WTC11 (cell line): ENCODE measurements at regions of chr11 and their contacts with region 1.

Region 1: DNA sequence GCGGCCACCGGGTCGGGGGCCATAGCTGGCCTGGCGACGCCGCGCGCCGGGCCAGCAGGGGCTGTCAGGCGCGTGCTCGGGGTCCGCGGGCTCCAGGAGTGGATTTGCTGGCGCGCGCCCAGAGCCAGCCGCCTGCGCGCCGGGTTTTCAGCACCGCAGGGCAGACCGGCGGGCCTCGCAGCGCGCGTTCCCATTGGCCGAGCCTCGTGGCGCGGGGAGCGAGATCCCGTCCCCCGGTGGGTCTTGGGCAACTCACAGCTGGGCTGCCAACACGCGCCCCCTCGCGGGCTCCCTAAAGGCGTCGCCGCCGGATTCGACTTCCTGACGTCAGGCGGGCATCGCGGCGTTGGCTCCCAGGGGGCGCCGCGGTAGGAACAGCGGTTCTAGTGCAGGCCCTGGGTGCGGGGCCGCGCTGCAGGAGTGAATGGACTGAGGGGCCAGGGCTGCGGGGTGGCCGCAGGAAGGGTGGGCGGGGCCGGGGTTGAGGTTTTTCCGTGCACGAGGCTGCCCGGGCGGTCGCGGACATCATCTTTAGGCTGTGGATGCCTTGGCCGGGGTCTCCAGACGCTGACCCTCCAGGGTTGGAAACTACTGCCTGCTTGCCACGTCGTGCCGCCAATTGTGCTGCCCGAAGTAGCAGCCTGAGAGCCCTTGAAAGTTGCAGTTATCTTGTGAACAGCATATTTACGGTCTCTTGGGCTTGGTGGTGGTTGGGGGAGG is at the start of gene FADS1:
- DNase-seq: peak; percentile 90
- ATAC-seq: peak; percentile 32
- H3K4me3 Mint-ChIP-seq: peak within 1 kb of the TSS; percentile 94
- H3K27ac Mint-ChIP-seq: peak within 1 kb of the TSS; percentile 99
- H3K4me1 Mint-ChIP-seq: peaks cover 23% of the 10 kb centered on the region
- H3K27me3 Mint-ChIP-seq: no peaks in the 10 kb centered on the region; the same call in 1 of the 2 replicates
- CTCF ChIP-seq: no peak
- total RNA-seq, gene FADS1: 105 to 108 TPM (median 105 TPM) in 3 replicates

Region 2: GRCh38 chr11:61645179-61645868 is 171.6 kb before region 1 on chr11:
- CTCF ChIA-PET with region 1: no interaction called
- POLR2A ChIA-PET with region 1: no interaction called
- DNase-seq: no peak
- ATAC-seq: no peak
- H3K4me3 Mint-ChIP-seq: no peak overlapping the region
- H3K27ac Mint-ChIP-seq: no peak overlapping the region
- H3K4me1 Mint-ChIP-seq: no peaks in the 10 kb centered on the region
- H3K27me3 Mint-ChIP-seq: no peaks in the 10 kb centered on the region
- CTCF ChIP-seq: no peak

Region 3: DNA sequence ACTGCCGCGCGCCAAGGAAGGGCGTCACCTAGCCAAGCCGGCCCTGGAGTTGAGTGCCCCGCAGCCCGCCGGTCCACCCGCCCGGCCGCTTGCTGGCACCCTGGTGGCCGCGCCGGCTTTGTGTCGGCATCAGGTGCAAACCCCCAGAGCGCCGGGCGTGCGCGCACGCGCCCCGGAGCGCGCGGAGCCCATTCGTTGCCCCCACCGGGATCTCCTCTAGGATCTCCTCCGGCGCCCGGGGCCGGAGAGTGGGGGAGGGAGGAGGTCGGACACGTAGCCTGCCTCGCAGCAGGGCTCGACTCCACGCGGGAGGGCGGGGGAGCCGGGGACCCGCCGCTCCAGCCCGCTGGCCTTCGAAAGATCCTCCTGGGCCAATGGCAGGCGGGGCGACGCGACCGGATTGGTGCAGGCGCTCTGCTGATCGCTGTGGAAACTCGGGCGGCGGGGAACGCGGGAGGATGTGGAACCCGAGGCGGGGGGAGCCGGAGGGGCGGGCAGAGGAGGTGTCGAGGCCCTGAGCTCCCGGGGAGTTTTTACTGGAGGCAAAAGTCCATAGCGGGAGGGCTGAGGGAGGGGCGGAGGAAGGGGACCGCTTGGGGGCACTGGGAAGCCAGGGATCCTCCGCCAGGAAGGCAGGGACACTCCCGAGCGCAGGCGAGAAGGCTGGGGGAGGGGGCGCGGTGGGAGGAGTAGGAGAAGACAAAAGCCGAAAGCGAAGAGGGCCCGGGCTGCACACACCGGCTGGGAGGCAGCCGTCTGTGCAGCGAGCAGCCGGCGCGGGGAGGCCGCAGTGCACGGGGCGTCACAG is 10.9 kb after region 1 on chr11 and contains the start of gene FADS2:
- CTCF ChIA-PET with region 1: interaction called, 40 read pairs
- POLR2A ChIA-PET with region 1: interaction called, 66 read pairs
- DNase-seq: peak; percentile 89
- ATAC-seq: peak; percentile 70
- H3K4me3 Mint-ChIP-seq: peak within 1 kb of the TSS; percentile 85
- H3K27ac Mint-ChIP-seq: peak within 1 kb of the TSS; percentile 97
- H3K4me1 Mint-ChIP-seq: peaks cover 48% of the 10 kb centered on the region
- H3K27me3 Mint-ChIP-seq: no peaks in the 10 kb centered on the region
- CTCF ChIP-seq: no peak
- total RNA-seq, gene FADS2: 416 to 423 TPM (median 422 TPM) in 3 replicates

Region 4: DNA sequence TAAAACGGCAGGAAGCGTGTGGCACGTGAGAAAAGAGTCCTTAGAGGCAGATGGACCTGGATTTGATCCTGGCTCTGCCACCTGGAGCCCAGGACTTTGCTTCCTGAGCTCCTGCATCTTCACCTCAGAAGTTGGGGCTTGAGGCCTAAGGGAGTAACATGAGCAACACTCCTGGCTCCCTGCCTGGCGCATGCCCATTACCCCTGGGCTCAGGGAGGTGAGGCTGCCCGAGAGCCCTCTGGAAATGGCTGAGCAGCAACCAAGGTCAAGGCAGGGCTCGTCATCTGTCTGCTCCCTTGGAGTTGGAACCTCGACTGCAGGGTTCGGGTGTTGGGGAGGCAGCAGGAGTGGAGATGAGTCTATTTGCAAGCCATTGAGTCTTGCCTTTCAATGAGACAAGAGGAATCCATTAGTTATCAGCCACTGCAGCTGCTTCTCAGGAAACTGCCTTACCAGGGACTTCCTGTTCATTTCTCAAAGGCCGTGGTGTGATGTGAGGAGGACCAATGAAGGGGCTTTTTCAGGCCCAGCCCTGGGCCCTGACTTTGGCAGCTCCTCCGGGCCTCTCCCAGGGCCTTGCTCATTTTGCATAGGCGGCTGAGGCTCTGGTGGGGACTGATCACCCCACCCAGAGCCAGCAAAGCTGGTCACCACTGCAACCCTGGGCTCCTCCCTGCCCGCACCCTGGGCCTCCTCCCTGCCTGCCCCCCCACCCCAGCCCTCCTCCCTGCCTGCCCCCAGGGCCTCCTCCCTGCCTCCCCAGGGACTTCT is 17.6 kb after region 1 on chr11:
- CTCF ChIA-PET with region 1: interaction called, 40 read pairs
- POLR2A ChIA-PET with region 1: interaction called, 66 read pairs
- DNase-seq: peak; percentile 49
- ATAC-seq: peak; percentile 87
- H3K4me3 Mint-ChIP-seq: no peak overlapping the region; the same call in 1 of the 2 replicates
- H3K27ac Mint-ChIP-seq: peak overlapping the region; percentile 98
- H3K4me1 Mint-ChIP-seq: peaks cover 70% of the 10 kb centered on the region
- H3K27me3 Mint-ChIP-seq: no peaks in the 10 kb centered on the region
- CTCF ChIP-seq: no peak

Region 5: DNA sequence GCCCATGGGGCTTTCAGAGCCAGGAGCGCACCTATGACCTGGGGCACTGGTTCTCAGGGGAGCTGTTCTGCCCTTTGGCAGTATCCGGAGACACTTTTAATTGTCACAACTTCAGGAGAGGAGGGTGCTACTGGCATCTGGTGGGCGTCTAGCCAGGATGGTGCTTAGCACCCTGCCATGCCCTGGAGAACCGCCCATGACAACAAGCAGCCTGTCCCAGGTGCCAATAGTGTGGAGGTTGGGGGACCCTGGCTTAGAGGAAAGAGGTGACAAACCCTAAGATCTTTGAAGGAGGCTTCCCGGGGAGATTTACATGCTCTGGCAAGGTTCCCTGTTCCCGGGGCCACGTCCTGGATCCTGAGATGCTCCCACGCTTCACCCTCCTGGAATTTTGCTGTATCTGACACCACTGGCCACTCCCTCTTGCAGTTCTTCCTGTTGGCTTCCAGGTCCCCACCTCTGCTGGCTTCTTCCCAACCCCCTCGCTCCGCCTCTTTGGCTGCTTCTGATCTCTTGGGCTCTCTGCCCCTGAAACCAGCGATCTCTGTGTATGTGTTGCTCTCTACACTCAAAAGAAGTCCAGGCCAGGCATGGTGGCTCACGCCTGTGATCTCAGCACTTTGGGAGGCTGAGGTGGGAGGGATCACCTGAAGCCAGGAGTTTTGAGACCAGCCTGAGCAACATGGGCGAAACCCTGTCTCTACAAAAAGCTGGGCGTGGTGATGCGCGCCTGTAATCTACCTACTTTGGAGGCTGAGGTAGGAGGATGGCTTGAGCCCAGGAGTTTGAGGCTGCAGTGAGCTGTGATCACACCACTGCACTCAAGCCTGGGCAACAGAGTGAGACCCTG is 43.4 kb after region 1 on chr11:
- CTCF ChIA-PET with region 1: no interaction called
- POLR2A ChIA-PET with region 1: no interaction called
- DNase-seq: no peak
- ATAC-seq: no peak
- H3K4me3 Mint-ChIP-seq: no peak overlapping the region
- H3K27ac Mint-ChIP-seq: no peak overlapping the region
- H3K4me1 Mint-ChIP-seq: no peaks in the 10 kb centered on the region
- H3K27me3 Mint-ChIP-seq: no peaks in the 10 kb centered on the region
- CTCF ChIP-seq: no peak

Region 6: GRCh38 chr11:61871158-61871597 is 54.3 kb after region 1 on chr11:
- CTCF ChIA-PET with region 1: interaction called, 11 read pairs
- POLR2A ChIA-PET with region 1: interaction called, 4 read pairs
- DNase-seq: peak; percentile 92
- ATAC-seq: peak; percentile 87
- H3K4me3 Mint-ChIP-seq: peak overlapping the region; percentile 50
- H3K27ac Mint-ChIP-seq: no peak overlapping the region
- H3K4me1 Mint-ChIP-seq: peaks cover 18% of the 10 kb centered on the region
- H3K27me3 Mint-ChIP-seq: peaks cover 9% of the 10 kb centered on the region
- CTCF ChIP-seq: peak; percentile 87